ENCODE measurements at regions of chr17 and their contacts with region 1.

Region 1: GRCh38 chr17:82267575-82268379 is 5.7 kb downstream of the CSNK1D start:
- DNase-seq: peak; percentile 86
- H3K4me3 ChIP-seq: peak overlapping the region in 1 of 3 experiments; percentile 19
- H3K27ac ChIP-seq: peak overlapping the region; percentile 26
- H3K4me1 ChIP-seq: peaks cover 48% of the 10 kb centered on the region
- H3K27me3 ChIP-seq: no peaks in the 10 kb centered on the region
- CTCF ChIP-seq: no peak

Region 2: GRCh38 chr17:82051776-82052637 is 215.8 kb before region 1 on chr17 and contains the starts of genes GPS1 and RFNG:
- CTCF ChIA-PET with region 1: no interaction called
- dilution Hi-C with region 1: loop called (anchors 10 kb)
- in situ Hi-C with region 1: no loop called
- intact Hi-C with region 1: no loop called
- DNase-seq: peak; percentile 59
- H3K4me3 ChIP-seq: peak within 1 kb of the TSS; percentile 61 to 86 (median 65)
- H3K27ac ChIP-seq: peak within 1 kb of the TSS; percentile 30
- H3K4me1 ChIP-seq: peaks cover 23% of the 10 kb centered on the region
- H3K27me3 ChIP-seq: no peaks in the 10 kb centered on the region
- CTCF ChIP-seq: no peak
- total RNA-seq, gene GPS1: 84.2 to 98.2 TPM
- total RNA-seq, gene RFNG: 37.7 to 38.2 TPM

Region 3: DNA sequence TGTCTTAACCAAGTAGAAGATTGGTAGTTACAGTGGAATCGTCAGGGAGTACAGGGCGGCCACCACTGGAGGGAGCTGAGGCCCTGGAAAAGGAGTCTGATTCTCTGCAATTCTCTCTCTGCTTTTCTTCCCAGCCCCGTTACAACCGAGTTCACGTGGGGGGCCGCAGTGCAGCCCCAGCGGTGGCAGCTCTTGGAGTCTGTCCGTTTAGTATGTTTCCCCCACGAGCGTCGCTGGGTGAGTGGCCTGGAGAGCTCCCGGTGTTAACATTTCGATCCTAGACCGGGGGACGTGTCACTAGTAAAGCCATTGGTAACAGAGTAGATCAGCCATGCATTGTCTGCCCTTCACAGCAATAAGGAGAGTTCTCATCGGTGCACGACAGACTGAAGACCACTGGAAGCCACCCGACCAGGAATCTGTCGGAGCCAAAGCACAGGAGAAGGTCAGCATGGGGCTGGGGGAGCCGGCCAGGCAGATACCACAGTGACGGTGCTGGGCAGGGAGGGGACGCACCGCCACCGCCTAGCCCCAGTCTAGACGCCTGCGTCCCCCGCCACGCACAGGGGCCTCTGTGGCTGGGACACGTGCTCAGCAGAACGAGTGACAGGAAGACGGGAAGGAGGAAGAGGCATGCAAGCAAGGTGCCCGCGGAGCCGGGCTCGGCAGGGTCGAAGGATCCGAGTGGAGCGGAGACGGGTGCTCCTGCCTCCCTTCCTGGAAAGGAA is 23.2 kb before region 1 on chr17:
- CTCF ChIA-PET with region 1: no interaction called
- dilution Hi-C with region 1: no loop called
- in situ Hi-C with region 1: no loop called
- intact Hi-C with region 1: loop called (anchors 1 kb)
- DNase-seq: no peak
- H3K4me3 ChIP-seq: no peak overlapping the region
- H3K27ac ChIP-seq: no peak overlapping the region
- H3K4me1 ChIP-seq: peaks cover 67% of the 10 kb centered on the region
- H3K27me3 ChIP-seq: no peaks in the 10 kb centered on the region
- CTCF ChIP-seq: peak; percentile 44 to 60